ENCODE measurements at regions of chr21 and their contacts with region 1.

Region 1: GRCh38 chr21:41167348-41168342 is at the start of gene BACE2:
- DNase-seq: peak; percentile 90 to 94
- ATAC-seq: peak; percentile 89
- H3K4me3 ChIP-seq: peak within 1 kb of the TSS; percentile 94 to 97
- H3K27ac ChIP-seq: peak within 1 kb of the TSS; percentile 49 to 85
- H3K4me1 ChIP-seq: no peaks in the 10 kb centered on the region
- H3K27me3 ChIP-seq: no peaks in the 10 kb centered on the region
- total RNA-seq, gene BACE2: 80.4 to 151 TPM

Region 2: DNA sequence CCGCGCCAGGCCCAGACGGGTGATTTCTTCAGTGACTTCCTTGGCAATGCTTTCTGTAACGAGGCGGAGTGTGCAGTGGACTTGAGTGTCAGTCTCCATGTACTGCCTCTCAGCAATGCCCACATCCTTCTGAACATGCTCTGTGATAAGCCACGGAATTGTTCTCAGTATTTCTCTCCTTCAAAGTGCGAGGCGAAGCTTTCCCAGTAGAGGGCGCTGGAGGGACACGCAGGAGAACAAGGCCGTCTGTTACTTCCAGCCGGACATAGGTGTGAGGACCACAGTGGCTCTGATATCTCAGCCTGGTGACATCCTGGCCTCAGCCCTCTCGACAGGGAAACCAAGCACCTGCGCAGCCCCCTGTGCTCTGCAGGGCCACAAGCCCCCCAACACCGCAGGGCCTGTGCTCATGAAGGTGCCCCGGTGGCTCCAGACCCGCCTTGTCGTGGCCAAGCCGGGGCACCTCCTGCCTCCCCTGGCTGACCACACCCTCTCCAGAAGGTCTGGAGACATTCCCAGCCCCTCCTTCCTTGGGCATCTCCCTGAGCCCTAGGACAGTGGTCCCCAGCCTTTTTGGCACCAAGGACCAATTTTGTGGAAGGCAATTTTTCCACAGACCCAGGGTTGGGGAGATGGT is 45.7 kb before region 1 on chr21:
- intact Hi-C with region 1: loop called in 1 of 2 experiments (anchors 5 kb)
- DNase-seq: peak; percentile 91 to 94
- ATAC-seq: peak; percentile 84
- H3K4me3 ChIP-seq: no peak overlapping the region
- H3K27ac ChIP-seq: no peak overlapping the region
- H3K4me1 ChIP-seq: no peaks in the 10 kb centered on the region
- H3K27me3 ChIP-seq: no peaks in the 10 kb centered on the region

Region 3: DNA sequence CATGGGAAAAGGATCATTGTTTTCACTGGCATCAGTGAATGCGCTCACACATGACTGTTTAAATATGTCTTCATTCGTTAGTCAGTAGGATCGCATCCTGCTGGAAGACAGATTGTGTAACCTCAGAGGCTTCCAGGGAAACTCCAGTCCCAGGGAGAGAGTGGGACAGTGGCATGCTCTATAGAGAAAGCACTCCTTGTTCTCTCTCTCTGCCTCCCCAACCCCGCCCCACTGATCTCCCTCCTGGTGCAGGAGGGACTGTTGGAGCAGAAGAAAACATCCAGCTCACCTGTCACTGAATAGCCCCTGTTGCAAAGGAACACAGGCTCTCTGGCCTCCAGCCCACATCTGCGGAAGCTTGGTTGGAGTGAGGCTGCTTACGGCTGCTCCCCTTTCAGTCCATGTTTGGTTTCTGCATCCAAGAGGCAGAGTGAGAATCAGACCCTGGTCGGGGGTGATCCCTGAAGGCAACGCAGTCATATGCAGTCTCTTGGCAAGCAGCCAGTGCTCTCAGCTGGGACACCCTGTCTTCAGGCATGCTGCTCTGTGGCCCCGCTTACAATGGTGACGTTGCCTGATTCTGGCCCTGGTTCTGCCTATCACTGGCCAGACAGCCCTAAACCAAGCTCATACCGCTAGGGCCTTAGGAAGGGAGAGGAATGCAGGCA is 39.9 kb after region 1 on chr21:
- intact Hi-C with region 1: loop called in 1 of 2 experiments (anchors 5 kb)
- DNase-seq: peak; percentile 84 to 88
- ATAC-seq: peak; percentile 87
- H3K4me3 ChIP-seq: no peak overlapping the region
- H3K27ac ChIP-seq: peak overlapping the region in 1 of 2 donors; percentile 66
- H3K4me1 ChIP-seq: no peaks in the 10 kb centered on the region
- H3K27me3 ChIP-seq: no peaks in the 10 kb centered on the region

Region 4: GRCh38 chr21:41235201-41235985 is 67.7 kb after region 1 on chr21:
- intact Hi-C with region 1: loop called (anchors 2 to 5 kb)
- DNase-seq: no peak
- ATAC-seq: no peak
- H3K4me3 ChIP-seq: no peak overlapping the region
- H3K27ac ChIP-seq: no peak overlapping the region
- H3K4me1 ChIP-seq: peaks cover 0 to 1% of the 10 kb centered on the region in 2 donors
- H3K27me3 ChIP-seq: no peaks in the 10 kb centered on the region

Region 5: GRCh38 chr21:41241316-41242035 is 73.8 kb after region 1 on chr21:
- intact Hi-C with region 1: loop called (anchors 2 to 5 kb)
- DNase-seq: no peak
- ATAC-seq: no peak
- H3K4me3 ChIP-seq: no peak overlapping the region
- H3K27ac ChIP-seq: no peak overlapping the region
- H3K4me1 ChIP-seq: peaks cover 0 to 1% of the 10 kb centered on the region in 2 donors
- H3K27me3 ChIP-seq: no peaks in the 10 kb centered on the region

Region 6: DNA sequence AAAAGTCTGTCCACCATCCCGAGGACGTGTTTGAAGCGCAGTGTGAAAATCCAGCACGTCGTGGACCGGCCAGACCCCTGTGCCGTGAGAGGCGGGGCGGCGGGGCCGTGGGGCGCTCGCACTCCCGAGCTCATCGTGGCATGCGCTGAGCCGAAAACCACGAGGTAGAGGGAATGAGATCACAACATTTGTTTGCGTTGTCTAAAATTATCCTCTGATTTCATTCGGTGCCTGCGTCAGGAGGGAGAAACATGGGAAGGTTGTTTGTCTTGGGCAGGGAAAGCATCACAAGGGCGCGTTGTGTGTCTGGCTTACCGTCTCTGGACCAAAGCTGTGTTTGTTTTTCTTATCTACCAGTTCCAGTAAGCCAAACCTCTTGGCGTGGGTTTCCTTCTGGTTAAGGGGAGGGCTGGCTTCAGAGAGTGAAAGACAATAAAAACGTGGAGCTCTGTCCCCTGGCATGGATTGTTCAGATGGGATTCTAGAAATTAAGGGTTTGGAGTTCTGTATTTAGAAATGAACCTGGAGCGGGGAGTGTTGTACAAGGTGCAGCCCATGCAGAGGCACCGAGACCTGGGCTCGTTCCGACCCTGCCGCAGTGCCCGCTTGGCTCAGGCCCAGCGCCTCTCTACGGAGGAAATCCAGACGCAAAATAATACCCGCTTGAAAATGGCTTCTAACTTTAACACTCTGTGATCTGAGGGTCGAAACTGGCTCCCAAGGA is 80.1 kb after region 1 on chr21:
- intact Hi-C with region 1: loop called in 1 of 2 experiments (anchors 2 kb)
- DNase-seq: peak; percentile 87 to 92
- ATAC-seq: peak; percentile 90
- H3K4me3 ChIP-seq: no peak overlapping the region
- H3K27ac ChIP-seq: peak overlapping the region; percentile 73 to 91
- H3K4me1 ChIP-seq: peaks cover 4 to 8% of the 10 kb centered on the region in 2 donors
- H3K27me3 ChIP-seq: no peaks in the 10 kb centered on the region

Region 7: GRCh38 chr21:41419911-41420862 is 252.5 kb after region 1 on chr21:
- intact Hi-C with region 1: loop called in 1 of 2 experiments (anchors 5 kb)
- DNase-seq: peak; percentile 91 to 94
- ATAC-seq: peak; percentile 94
- H3K4me3 ChIP-seq: peak overlapping the region; percentile 15 to 57
- H3K27ac ChIP-seq: peak overlapping the region in 1 of 2 donors; percentile 61
- H3K4me1 ChIP-seq: no peaks in the 10 kb centered on the region
- H3K27me3 ChIP-seq: no peaks in the 10 kb centered on the region